Caco-2 (cell line): ENCODE measurements at regions of chr4 and their contacts with region 1.

Region 1: GRCh38 chr4:106978046-106978774 is 57.9 kb downstream of the DKK2 start:
- DNase-seq: no peak
- H3K4me3 ChIP-seq: no peak overlapping the region
- H3K4me3 Mint-ChIP-seq: no peak overlapping the region
- H3K27ac Mint-ChIP-seq: no peak overlapping the region
- H3K4me1 ChIP-seq: no peaks in the 10 kb centered on the region
- H3K4me1 Mint-ChIP-seq: no peaks in the 10 kb centered on the region
- H3K27me3 ChIP-seq: no peaks in the 10 kb centered on the region
- H3K27me3 Mint-ChIP-seq: peaks cover 7% of the 10 kb centered on the region
- CTCF ChIP-seq: no peak

Region 2: GRCh38 chr4:106762666-106763443 is 215.4 kb before region 1 on chr4:
- CTCF ChIA-PET with region 1: no interaction called
- POLR2A ChIA-PET with region 1: no interaction called
- intact Hi-C with region 1: loop called (anchors 5 kb)
- DNase-seq: no peak
- H3K4me3 ChIP-seq: no peak overlapping the region
- H3K4me3 Mint-ChIP-seq: no peak overlapping the region
- H3K27ac Mint-ChIP-seq: no peak overlapping the region
- H3K4me1 ChIP-seq: no peaks in the 10 kb centered on the region
- H3K4me1 Mint-ChIP-seq: no peaks in the 10 kb centered on the region
- H3K27me3 ChIP-seq: no peaks in the 10 kb centered on the region
- H3K27me3 Mint-ChIP-seq: no peaks in the 10 kb centered on the region
- CTCF ChIP-seq: no peak